ENCODE measurements at regions of chr1 and their contacts with region 1.

Region 1: GRCh38 chr1:150067184-150068036 is at the start of gene VPS45:
- DNase-seq: peak; percentile 93
- ATAC-seq: peak; percentile 98
- H3K4me3 Mint-ChIP-seq: peak within 1 kb of the TSS; percentile 94
- H3K27ac Mint-ChIP-seq: peak within 1 kb of the TSS; percentile 95
- H3K4me1 Mint-ChIP-seq: peaks cover 33% of the 10 kb centered on the region
- H3K27me3 Mint-ChIP-seq: no peaks in the 10 kb centered on the region
- total RNA-seq, gene VPS45: 18.5 to 20.6 TPM

Region 2: DNA sequence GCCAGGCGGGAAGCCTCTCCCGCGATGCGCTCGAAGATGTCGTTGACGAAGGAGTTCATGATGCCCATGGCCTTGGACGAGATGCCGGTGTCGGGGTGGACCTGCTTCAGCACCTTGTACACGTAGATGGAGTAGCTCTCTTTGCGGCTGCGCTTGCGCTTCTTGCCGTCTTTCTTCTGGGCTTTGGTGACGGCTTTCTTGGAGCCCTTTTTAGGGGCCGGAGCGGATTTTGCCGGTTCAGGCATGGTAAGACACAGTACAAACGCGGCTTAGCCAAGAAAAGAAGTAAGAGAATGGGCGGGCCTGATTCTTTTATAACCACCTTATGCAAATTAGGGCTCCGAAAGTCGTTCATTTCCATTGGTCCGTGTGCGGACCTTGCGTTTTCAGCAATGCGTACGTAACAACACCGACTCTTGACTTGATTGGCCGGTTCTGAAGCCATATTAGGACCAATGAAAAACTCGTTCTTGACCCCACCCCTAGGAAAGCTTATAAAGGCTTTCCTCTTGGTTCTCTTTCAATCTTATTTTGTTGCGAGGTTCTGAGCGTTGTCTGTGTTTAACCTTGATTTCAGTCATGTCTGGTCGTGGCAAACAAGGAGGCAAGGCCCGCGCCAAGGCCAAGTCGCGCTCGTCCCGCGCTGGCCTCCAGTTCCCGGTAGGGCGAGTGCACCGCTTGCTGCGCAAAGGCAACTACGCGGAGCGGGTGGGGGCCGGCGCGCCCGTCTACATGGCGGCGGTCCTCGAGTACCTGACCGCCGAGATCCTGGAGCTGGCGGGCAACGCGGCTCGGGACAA is 180.8 kb before region 1 on chr1:
- CTCF ChIA-PET with region 1: no interaction called
- POLR2A ChIA-PET with region 1: interaction called, 6 read pairs
- intact Hi-C with region 1: loop called in 1 of 2 experiments (anchors 1 kb)
- DNase-seq: peak; percentile 91
- ATAC-seq: peak; percentile 60
- H3K4me3 Mint-ChIP-seq: no peak overlapping the region
- H3K27ac Mint-ChIP-seq: no peak overlapping the region
- H3K4me1 Mint-ChIP-seq: peaks cover 7% of the 10 kb centered on the region
- H3K27me3 Mint-ChIP-seq: no peaks in the 10 kb centered on the region

Region 3: GRCh38 chr1:149927503-149928387 is 139.7 kb before region 1 on chr1 and contains the start of gene SF3B4:
- CTCF ChIA-PET with region 1: interaction called, 7 read pairs
- POLR2A ChIA-PET with region 1: no interaction called
- intact Hi-C with region 1: loop called in 1 of 2 experiments (anchors 1 kb)
- DNase-seq: peak; percentile 97
- ATAC-seq: peak; percentile 97
- H3K4me3 Mint-ChIP-seq: peak within 1 kb of the TSS; percentile 97
- H3K27ac Mint-ChIP-seq: peak within 1 kb of the TSS; percentile 96
- H3K4me1 Mint-ChIP-seq: peaks cover 43% of the 10 kb centered on the region
- H3K27me3 Mint-ChIP-seq: peaks cover 3% of the 10 kb centered on the region
- total RNA-seq, gene SF3B4: 68.6 to 71.9 TPM

Region 4: DNA sequence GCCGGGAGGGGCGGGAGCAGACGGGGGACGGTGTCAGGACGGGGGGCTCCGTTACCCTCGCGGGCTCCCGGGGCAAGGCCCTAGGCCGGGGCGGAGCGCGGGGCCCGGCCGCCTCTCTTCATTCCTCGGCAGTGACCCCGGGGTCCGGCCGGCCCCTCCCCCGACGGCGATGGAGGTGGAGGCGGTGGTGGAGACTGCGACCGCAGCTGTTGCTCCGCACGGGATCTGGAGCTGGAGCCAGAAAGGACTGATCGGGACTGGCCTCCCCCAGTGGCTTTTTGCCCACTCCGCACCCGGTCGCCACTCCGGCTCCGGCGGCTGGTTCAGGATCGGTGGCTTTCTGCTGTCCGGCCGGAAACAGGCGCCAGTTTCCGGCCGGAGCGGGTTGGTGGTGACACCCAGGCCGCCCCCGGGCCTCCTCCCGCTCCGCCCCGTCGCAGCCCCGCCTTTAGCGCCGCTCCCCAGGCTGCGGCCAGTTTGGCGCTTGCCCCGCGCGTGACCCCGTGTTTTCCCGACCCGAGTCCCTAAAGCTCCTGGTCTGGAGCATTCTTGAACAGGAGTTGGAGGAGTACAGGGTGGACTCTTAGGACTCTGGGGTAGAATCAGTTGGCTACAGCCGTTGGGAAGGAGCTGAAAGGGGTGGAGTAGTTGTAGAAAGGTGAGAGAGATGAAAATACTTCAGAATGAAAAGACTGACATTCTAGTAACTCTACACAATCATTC is 56.9 kb before region 1 on chr1 and contains the start of gene OTUD7B:
- CTCF ChIA-PET with region 1: no interaction called
- POLR2A ChIA-PET with region 1: no interaction called
- intact Hi-C with region 1: loop called in 1 of 2 experiments (anchors 1 kb)
- DNase-seq: peak; percentile 88
- ATAC-seq: peak; percentile 62
- H3K4me3 Mint-ChIP-seq: peak within 1 kb of the TSS; percentile 99
- H3K27ac Mint-ChIP-seq: peak within 1 kb of the TSS; percentile 99
- H3K4me1 Mint-ChIP-seq: peaks cover 37% of the 10 kb centered on the region
- H3K27me3 Mint-ChIP-seq: no peaks in the 10 kb centered on the region
- total RNA-seq, gene OTUD7B: 18.5 to 20.1 TPM

Region 5: DNA sequence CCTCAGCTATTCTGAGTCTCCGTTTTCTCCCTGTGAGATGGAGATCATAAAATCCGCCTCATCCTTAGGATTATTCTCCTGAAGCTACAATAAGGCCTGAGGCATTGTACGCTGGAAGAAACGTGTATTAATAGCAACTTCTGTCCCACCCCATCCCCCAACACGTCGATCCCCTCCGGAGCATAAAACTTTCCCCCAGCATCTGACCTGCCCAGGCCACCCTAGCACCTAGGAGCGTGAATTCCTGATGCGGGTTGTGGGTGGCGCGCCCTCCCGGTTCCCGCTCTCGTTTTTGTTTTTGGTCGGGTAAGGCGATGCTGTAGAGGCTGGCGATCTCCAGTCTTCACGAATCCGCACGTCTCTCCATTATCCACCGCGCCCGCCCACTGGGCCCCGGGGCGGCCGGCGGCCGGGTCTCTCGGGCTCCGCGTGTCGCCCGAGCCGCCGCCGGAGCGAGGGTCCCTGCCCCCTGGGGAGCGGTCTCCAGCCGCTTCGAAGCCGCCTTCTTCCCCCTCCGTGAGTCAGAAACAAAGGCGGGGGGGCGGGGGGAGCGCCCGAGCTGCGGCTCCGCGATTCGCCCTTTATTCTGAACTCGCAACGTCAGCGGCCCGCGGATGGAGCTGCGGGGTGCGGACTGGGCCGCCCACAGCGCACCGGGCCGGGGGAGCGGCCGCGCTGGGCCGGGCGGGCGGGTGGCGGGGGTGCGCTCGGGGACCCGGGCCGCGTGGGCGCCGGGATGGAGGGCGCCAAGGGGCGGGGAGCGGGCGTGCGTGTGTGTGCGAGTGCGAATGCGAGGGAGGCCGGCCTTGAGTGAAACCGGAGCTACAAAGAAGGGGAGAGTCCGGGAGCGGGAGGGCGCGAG is 82.1 kb after region 1 on chr1 and contains the start of gene PLEKHO1:
- CTCF ChIA-PET with region 1: interaction called, 5 read pairs
- POLR2A ChIA-PET with region 1: no interaction called
- intact Hi-C with region 1: loop called in 1 of 2 experiments (anchors 1 kb)
- DNase-seq: peak; percentile 89
- ATAC-seq: peak; percentile 74
- H3K4me3 Mint-ChIP-seq: peak within 1 kb of the TSS; percentile 82
- H3K27ac Mint-ChIP-seq: peak within 1 kb of the TSS; percentile 86
- H3K4me1 Mint-ChIP-seq: peaks cover 51% of the 10 kb centered on the region
- H3K27me3 Mint-ChIP-seq: peaks cover 1% of the 10 kb centered on the region
- total RNA-seq, gene PLEKHO1: 13.2 TPM

Region 6: GRCh38 chr1:150186789-150187559 is 119.6 kb after region 1 on chr1:
- CTCF ChIA-PET with region 1: interaction called, 15 read pairs
- POLR2A ChIA-PET with region 1: no interaction called
- intact Hi-C with region 1: loop called in 1 of 2 experiments (anchors 5 kb)
- DNase-seq: peak; percentile 17
- ATAC-seq: peak; percentile 82
- H3K4me3 Mint-ChIP-seq: no peak overlapping the region
- H3K27ac Mint-ChIP-seq: peak overlapping the region; percentile 13
- H3K4me1 Mint-ChIP-seq: peaks cover 10% of the 10 kb centered on the region
- H3K27me3 Mint-ChIP-seq: no peaks in the 10 kb centered on the region

Region 7: DNA sequence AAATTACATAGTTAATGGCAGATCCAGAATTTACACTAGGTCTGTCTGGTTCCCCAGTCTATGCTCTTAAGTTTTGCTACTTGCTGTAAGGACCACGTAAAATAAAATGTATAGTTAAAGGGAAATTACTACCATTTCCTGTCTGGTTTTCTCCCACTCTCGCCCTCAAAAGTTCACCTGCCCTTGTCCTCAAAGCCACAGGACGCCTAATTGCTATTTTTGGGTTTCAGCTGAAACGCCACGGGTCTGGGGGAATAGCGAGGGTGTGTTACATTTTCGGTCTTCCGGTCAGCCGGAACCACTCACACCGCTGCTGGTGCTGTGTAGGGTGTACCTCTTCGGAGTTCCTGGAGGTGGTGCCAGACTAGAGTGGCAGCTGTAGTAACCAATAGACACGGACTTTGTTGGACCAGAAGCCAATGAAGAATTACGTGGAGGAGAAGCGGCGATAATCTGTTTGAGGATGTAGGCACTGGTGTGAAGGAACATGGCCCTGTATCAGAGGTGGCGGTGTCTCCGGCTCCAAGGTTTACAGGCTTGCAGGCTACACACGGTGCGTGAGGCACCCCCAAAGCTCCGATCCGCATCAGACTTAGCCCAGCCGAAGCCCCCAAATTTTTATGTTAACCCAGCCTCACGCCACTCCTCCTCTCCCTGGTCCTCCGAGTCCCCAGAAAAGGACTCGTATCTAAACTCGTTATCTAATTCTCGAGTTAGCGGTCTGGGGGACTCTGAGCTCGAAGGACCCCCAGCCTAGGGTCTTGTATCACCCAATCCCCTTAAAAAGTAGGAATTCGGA is 419.8 kb after region 1 on chr1 and contains the start of gene TARS2:
- CTCF ChIA-PET with region 1: no interaction called
- POLR2A ChIA-PET with region 1: no interaction called
- intact Hi-C with region 1: loop called in 1 of 2 experiments (anchors 1 kb)
- DNase-seq: peak; percentile 96
- ATAC-seq: peak; percentile 100
- H3K4me3 Mint-ChIP-seq: peak within 1 kb of the TSS; percentile 96
- H3K27ac Mint-ChIP-seq: peak within 1 kb of the TSS; percentile 99
- H3K4me1 Mint-ChIP-seq: peaks cover 13% of the 10 kb centered on the region
- H3K27me3 Mint-ChIP-seq: no peaks in the 10 kb centered on the region
- total RNA-seq, gene TARS2: 43.8 to 58.6 TPM